ENCODE measurements at regions of chr1 and their contacts with region 1.

Region 1: GRCh38 chr1:159009704-159010361 is at the start of gene IFI16:
- DNase-seq: peak; percentile 31 to 85
- ATAC-seq: peak; percentile 59 to 82 (median 67)
- H3K4me3 ChIP-seq: peak within 1 kb of the TSS; percentile 96
- H3K4me3 Mint-ChIP-seq: peak within 1 kb of the TSS; percentile 98
- H3K27ac ChIP-seq: peak within 1 kb of the TSS; percentile 91
- H3K27ac Mint-ChIP-seq: peak within 1 kb of the TSS; percentile 94 to 95
- H3K4me1 ChIP-seq: peaks cover 29% of the 10 kb centered on the region
- H3K4me1 Mint-ChIP-seq: peaks cover 80 to 86% of the 10 kb centered on the region in 2 donors
- H3K27me3 ChIP-seq: no peaks in the 10 kb centered on the region
- H3K27me3 Mint-ChIP-seq: no peaks in the 10 kb centered on the region
- CTCF ChIP-seq: no peak
- total RNA-seq, gene IFI16: 141 to 218 (median 151) TPM

Region 2: DNA sequence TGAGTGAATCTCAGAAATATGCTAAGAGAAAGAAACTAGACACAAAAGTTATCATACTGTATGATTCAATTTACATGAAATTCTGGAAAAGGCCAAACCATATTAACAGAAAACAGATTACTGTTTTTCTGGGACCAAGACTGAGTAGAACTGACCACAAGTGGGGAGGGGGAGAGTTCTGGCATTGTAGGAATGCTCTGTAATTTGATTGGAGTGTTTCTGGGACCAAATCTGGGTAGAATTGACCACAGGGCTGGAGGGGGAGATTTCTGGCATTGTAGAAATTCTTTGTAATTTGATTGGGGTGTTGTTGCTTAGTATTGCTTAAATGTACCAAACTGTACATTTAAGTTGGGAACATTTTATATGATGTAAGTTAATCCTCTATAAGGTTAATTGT is 551.6 kb before region 1 on chr1:
- intact Hi-C with region 1: no loop called
- DNase-seq: no peak
- ATAC-seq: no peak
- H3K4me3 ChIP-seq: no peak overlapping the region
- H3K4me3 Mint-ChIP-seq: no peak overlapping the region
- H3K27ac ChIP-seq: no peak overlapping the region
- H3K27ac Mint-ChIP-seq: no peak overlapping the region
- H3K4me1 ChIP-seq: no peaks in the 10 kb centered on the region
- H3K4me1 Mint-ChIP-seq: no peaks in the 10 kb centered on the region
- H3K27me3 ChIP-seq: peaks cover 3% of the 10 kb centered on the region
- H3K27me3 Mint-ChIP-seq: peaks cover 28 to 50% of the 10 kb centered on the region in 2 donors
- CTCF ChIP-seq: no peak

Region 3: GRCh38 chr1:158819461-158820443 is 190.1 kb before region 1 on chr1:
- intact Hi-C with region 1: loop called (anchors 2 kb)
- DNase-seq: peak in 1 of 2 donors; percentile 46
- ATAC-seq: peak; percentile 94 to 97 (median 97)
- H3K4me3 ChIP-seq: no peak overlapping the region
- H3K4me3 Mint-ChIP-seq: peak overlapping the region; percentile 84
- H3K27ac ChIP-seq: peak overlapping the region; percentile 63
- H3K27ac Mint-ChIP-seq: peak overlapping the region; percentile 85 to 87
- H3K4me1 ChIP-seq: peaks cover 14% of the 10 kb centered on the region
- H3K4me1 Mint-ChIP-seq: peaks cover 22 to 29% of the 10 kb centered on the region in 2 donors
- H3K27me3 ChIP-seq: no peaks in the 10 kb centered on the region
- H3K27me3 Mint-ChIP-seq: no peaks in the 10 kb centered on the region
- CTCF ChIP-seq: no peak

Region 4: DNA sequence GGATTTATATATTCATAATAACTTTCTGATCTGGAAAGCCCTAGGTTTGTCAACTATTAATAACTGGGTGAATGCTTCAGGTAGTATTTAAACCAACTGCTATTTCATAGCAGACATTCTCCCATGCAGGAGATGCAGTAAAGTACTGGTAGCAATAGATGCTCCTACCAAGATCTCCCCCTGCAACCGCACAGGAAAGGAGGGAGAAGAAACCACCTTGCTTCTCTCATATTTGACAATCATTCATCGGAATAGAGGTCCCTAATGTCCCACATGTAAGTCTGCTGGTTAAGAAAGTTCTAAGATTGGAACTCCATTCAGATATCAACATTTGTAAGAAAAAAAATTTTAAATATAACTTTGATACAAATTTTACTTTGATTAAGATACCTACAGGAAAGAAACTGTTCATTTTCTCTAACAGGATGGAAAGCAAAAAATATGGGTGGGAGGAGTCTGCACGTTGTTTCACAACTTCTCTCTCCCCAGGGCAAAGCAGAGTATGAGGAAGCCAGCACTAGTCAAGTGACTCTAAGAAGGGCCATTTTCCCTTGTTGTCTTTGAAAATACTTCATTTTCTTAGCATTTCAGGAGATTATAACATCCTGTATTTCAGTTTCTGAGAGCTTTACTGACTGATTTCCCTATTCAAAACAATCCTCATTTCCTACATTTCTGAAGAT is 78.6 kb before region 1 on chr1 and contains the start of gene PYHIN1:
- intact Hi-C with region 1: loop called (anchors 1 kb)
- DNase-seq: peak in 1 of 2 donors; percentile 71
- ATAC-seq: peak; percentile 70 to 86 (median 76)
- H3K4me3 ChIP-seq: peak within 1 kb of the TSS; percentile 75
- H3K4me3 Mint-ChIP-seq: peak within 1 kb of the TSS; percentile 98
- H3K27ac ChIP-seq: peak within 1 kb of the TSS; percentile 90
- H3K27ac Mint-ChIP-seq: peak within 1 kb of the TSS; percentile 90 to 95
- H3K4me1 ChIP-seq: peaks cover 24% of the 10 kb centered on the region
- H3K4me1 Mint-ChIP-seq: peaks cover 55 to 64% of the 10 kb centered on the region in 2 donors
- H3K27me3 ChIP-seq: no peaks in the 10 kb centered on the region
- H3K27me3 Mint-ChIP-seq: no peaks in the 10 kb centered on the region
- CTCF ChIP-seq: no peak
- total RNA-seq, gene PYHIN1: 171 to 313 (median 197) TPM

Region 5: DNA sequence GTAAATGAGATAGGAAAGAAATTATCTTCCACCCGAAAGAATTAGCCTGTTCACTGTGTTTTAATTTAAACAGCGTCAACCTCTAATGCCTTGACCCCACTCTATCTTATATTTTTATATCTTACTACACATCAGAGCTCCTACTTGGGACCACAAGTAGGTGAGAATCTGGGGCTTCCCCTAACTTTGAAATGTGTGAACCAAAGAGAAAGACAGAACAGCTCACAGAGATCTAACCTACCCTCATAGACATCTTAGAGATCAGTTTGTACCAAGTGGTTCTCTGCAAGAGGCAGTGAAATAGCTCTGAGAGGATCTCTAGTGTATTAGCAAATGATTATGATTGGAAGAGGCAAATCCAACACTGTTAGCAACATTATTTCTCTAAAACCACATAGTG is 31.1 kb before region 1 on chr1:
- intact Hi-C with region 1: loop called (anchors 2 kb)
- DNase-seq: peak in 1 of 2 donors; percentile 65
- ATAC-seq: peak; percentile 93 to 99 (median 97)
- H3K4me3 ChIP-seq: no peak overlapping the region
- H3K4me3 Mint-ChIP-seq: peak overlapping the region; percentile 76
- H3K27ac ChIP-seq: peak overlapping the region; percentile 56
- H3K27ac Mint-ChIP-seq: peak overlapping the region; percentile 78 to 92
- H3K4me1 ChIP-seq: peaks cover 18% of the 10 kb centered on the region
- H3K4me1 Mint-ChIP-seq: peaks cover 78 to 79% of the 10 kb centered on the region in 2 donors
- H3K27me3 ChIP-seq: no peaks in the 10 kb centered on the region
- H3K27me3 Mint-ChIP-seq: no peaks in the 10 kb centered on the region
- CTCF ChIP-seq: no peak

Region 6: DNA sequence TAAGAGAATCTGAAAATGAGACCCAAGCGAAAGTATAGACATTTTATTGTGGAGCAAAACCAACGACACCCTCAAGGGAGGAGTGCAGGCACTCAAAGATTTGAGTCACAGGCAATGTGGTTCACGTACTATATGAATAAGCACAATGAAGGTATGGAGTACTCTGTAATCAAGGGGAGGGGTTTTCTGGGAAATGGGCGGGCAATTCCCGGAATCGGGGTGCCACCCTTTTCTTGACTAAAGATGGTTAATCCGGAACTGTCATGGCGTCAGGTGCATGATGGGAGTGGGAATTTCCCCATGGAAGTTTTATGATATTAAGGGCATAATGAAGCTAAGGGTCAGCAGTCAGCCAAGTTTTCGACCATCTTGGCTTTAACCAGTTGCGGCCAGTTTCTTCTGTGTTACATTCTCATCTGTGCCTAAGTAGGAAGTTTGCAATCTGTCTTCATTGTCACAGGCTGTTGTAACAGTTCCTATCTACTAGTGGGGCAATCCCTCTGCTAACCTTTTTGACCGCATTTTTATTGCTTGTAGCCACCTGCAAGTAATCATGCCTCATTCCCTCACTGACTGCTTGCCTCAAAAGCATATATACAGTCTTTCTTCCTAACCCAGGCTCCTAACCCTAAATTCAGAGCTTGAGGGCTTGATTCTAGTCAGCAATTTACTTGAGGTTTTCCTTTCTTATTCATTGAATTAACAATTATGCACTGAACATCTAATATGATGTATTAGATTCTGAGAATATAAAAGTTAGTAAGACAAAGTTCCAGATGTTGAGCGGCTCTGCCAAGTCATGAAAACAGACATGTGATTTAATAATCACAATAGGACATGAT is 67.5 kb after region 1 on chr1:
- intact Hi-C with region 1: loop called (anchors 2 kb)
- DNase-seq: peak; percentile 30 to 90
- ATAC-seq: peak in 2 of 3 donors; percentile 62 to 86
- H3K4me3 ChIP-seq: peak overlapping the region; percentile 28
- H3K4me3 Mint-ChIP-seq: peak overlapping the region; percentile 46
- H3K27ac ChIP-seq: peak overlapping the region; percentile 69
- H3K27ac Mint-ChIP-seq: peak overlapping the region; percentile 68 to 90
- H3K4me1 ChIP-seq: peaks cover 14% of the 10 kb centered on the region
- H3K4me1 Mint-ChIP-seq: peaks cover 8 to 16% of the 10 kb centered on the region in 2 donors
- H3K27me3 ChIP-seq: no peaks in the 10 kb centered on the region
- H3K27me3 Mint-ChIP-seq: peaks cover 12 to 20% of the 10 kb centered on the region in 2 donors
- CTCF ChIP-seq: no peak

Measured in natural killer cell (primary cell).